B cell (primary cell): ENCODE measurements at regions of chr11 and their contacts with region 1.

Region 1: DNA sequence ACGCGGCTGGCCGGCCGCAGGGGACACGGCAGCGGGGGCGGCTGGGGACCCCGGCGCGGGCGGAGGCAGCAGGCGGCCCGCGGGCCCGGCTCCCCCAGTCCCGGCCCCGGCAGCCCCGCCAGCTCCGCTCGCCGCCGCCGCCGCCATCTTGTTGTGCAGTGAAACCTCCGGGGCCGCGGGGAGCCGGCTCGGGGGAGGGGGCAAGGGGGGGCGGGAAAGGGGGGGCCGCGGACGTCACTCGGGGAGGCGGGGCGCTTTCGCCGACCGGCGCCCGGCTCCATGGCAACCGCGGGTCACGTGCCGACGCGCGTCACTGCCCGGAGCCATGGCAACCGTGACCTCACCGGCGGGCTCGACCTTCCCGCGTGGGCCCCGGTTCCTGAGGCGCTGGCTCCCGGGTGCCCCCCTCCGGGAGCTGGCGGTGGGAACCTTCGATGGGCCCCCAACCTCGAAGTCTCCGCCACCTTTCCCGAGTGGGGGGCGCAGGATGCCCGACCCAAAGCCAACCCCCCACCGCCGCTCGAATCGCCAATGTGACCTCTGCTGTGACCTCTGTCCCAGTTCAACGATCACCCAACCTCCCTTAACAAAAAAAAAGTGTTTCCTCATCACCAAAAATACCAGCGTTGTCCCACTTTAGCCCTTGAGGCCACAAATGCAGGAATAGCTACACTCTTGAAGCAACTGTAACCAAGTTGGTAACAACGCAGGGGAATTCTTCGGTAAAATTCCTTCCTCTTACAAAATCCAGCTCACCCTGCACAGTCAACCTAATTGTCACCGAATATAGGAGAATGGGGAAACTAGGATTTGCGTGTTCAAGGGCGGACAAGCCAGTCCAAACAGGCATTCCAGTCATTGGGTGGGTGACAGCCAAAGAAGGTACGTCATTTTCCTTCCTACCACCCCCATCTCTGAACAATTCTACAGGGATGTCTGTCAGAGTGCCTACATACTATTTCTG is at the start of gene SIK3:
- DNase-seq: peak; percentile 97
- ATAC-seq: peak; percentile 80
- H3K4me3 ChIP-seq: peak within 1 kb of the TSS; percentile 67 to 93 (median 78)
- H3K4me3 Mint-ChIP-seq: peak within 1 kb of the TSS; percentile 99
- H3K27ac ChIP-seq: peak within 1 kb of the TSS; percentile 92 to 100
- H3K27ac Mint-ChIP-seq: peak within 1 kb of the TSS; percentile 95
- H3K4me1 ChIP-seq: peaks cover 44 to 51% of the 10 kb centered on the region in 2 donors
- H3K4me1 Mint-ChIP-seq: peaks cover 56% of the 10 kb centered on the region
- H3K27me3 ChIP-seq: no peaks in the 10 kb centered on the region
- H3K27me3 Mint-ChIP-seq: no peaks in the 10 kb centered on the region
- CTCF ChIP-seq: peak; percentile 47
- total RNA-seq, gene SIK3: 180 and 196 TPM in 2 replicates

Region 2: DNA sequence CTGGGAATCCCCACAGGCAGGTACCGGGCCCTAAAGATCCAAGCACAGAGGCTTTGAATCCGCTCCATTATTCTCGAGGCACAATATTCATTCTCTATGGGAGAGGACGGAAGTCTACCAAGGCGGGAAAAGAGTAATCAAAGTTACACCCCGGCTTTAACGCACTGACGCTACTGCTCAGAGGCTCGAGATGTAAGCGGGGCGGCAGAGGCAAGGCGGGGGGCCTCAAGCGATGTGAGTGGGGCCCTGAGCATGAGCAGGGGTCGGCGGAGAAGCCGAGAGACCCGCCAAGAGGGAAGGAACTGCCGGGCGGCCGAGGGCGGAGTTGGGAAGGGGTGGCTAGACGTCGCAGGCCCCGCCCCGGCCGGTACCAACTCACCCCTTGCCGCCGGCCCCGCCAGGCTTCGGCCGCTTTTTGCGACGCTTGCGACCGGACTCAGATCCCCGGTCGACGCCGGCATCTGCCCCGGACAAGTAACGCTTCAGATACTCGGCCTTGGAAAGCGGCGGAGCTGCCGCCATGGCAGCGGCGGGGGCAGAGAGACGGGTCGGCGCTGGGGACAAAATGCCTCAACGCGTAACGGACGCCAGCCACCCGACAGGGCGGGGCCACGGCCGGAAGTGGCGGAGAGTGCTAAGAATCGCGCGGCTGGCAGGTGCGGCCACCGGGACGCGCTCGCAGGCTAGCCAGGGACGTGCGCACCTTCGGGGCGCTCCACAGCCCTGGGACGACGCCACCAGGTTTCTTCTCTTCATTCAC is 325.9 kb before region 1 on chr11 and contains the start of gene BUD13:
- CTCF ChIA-PET with region 1: no interaction called
- POLR2A ChIA-PET with region 1: no interaction called
- intact Hi-C with region 1: loop called (anchors 5 kb)
- DNase-seq: peak; percentile 96
- ATAC-seq: peak; percentile 89
- H3K4me3 ChIP-seq: peak within 1 kb of the TSS; percentile 71 to 99 (median 95)
- H3K4me3 Mint-ChIP-seq: peak within 1 kb of the TSS; percentile 93
- H3K27ac ChIP-seq: peak within 1 kb of the TSS; percentile 85 to 96
- H3K27ac Mint-ChIP-seq: peak within 1 kb of the TSS; percentile 93
- H3K4me1 ChIP-seq: peaks cover 23 to 28% of the 10 kb centered on the region in 2 donors
- H3K4me1 Mint-ChIP-seq: peaks cover 34% of the 10 kb centered on the region
- H3K27me3 ChIP-seq: no peaks in the 10 kb centered on the region
- H3K27me3 Mint-ChIP-seq: no peaks in the 10 kb centered on the region
- CTCF ChIP-seq: no peak
- total RNA-seq, gene BUD13: 24.2 and 24.8 TPM in 2 replicates

Region 3: GRCh38 chr11:116890193-116890592 is 208.4 kb before region 1 on chr11:
- CTCF ChIA-PET with region 1: interaction called, 39 read pairs
- POLR2A ChIA-PET with region 1: no interaction called
- intact Hi-C with region 1: loop called (anchors 1 kb)
- DNase-seq: no peak
- ATAC-seq: no peak
- H3K4me3 ChIP-seq: no peak overlapping the region
- H3K4me3 Mint-ChIP-seq: no peak overlapping the region
- H3K27ac ChIP-seq: peak overlapping the region in 1 of 2 donors; percentile 50
- H3K27ac Mint-ChIP-seq: peak overlapping the region; percentile 16
- H3K4me1 ChIP-seq: peaks cover 3 to 6% of the 10 kb centered on the region in 2 donors
- H3K4me1 Mint-ChIP-seq: peaks cover 11% of the 10 kb centered on the region
- H3K27me3 ChIP-seq: no peaks in the 10 kb centered on the region
- H3K27me3 Mint-ChIP-seq: no peaks in the 10 kb centered on the region
- CTCF ChIP-seq: no peak

Region 4: DNA sequence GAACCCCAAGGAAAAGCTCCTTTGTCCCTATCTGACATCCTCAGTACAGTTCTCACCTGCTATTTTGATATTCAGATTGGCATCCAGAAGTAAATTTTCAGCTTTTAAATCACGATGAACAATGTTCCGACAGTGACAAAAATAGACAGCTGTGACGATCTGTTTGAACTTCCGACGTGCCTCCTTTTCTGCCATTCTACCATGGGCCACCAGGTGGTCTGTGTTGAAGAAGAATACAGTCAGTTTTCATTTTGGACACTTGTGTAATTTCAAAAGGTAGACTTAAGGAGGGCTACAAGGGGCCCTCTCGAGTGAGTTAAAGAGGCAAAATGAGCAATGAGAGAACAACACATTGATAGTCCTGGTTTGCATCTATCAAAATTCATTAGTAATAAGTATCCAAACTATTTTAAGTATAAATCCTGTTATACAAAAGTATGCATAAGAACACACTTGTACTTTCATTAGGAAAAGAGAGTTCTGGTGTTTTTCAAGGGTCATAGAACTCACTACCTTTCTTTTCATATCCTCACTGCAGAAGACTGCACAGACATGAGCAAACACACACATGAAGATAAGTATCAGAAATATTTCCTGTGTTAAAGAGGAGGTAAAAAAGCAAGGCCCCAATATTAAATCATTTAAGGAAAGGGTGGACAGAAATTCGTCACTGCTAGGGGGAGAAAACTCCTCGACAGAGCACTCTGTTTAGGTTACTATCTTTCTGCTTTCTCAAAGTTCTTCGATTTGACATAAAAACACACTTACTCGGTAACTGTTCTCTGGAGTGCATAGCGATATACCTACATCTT is 171.2 kb before region 1 on chr11:
- CTCF ChIA-PET with region 1: interaction called, 57 read pairs
- POLR2A ChIA-PET with region 1: interaction called, 19 read pairs
- intact Hi-C with region 1: loop called (anchors 1 kb)
- DNase-seq: peak; percentile 81
- ATAC-seq: peak; percentile 44
- H3K4me3 ChIP-seq: peak overlapping the region in 3 of 5 experiments; percentile 24 to 54 (median 32)
- H3K4me3 Mint-ChIP-seq: peak overlapping the region; percentile 79
- H3K27ac ChIP-seq: peak overlapping the region; percentile 95 to 96
- H3K27ac Mint-ChIP-seq: peak overlapping the region; percentile 95
- H3K4me1 ChIP-seq: peaks cover 86 to 91% of the 10 kb centered on the region in 2 donors
- H3K4me1 Mint-ChIP-seq: peaks cover 79% of the 10 kb centered on the region
- H3K27me3 ChIP-seq: no peaks in the 10 kb centered on the region
- H3K27me3 Mint-ChIP-seq: no peaks in the 10 kb centered on the region
- CTCF ChIP-seq: peak; percentile 79

Region 5: DNA sequence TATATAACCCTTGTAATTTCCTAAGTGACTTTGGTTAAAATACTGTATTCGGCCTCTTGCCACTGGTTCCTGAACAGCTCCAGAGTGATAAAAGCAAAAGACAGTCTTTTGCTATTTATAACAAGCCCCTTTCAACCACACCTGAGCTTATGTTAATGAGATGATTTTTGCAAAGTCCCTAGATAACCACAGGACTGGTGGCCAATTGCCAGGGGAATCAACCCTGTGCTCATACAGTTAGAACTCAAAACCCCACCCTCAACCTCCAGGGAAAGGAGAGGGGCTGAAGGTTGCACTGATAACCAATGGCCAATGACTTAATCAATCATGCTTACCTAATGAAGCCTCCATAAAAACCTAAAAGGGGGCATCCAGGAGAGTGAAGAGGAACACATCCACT is 78.3 kb before region 1 on chr11:
- CTCF ChIA-PET with region 1: no interaction called
- POLR2A ChIA-PET with region 1: interaction called, 3 read pairs
- intact Hi-C with region 1: loop called (anchors 2 kb)
- DNase-seq: peak; percentile 70
- ATAC-seq: peak; percentile 81
- H3K4me3 ChIP-seq: peak overlapping the region in 3 of 5 experiments; percentile 3 to 21 (median 13)
- H3K4me3 Mint-ChIP-seq: peak overlapping the region; percentile 65
- H3K27ac ChIP-seq: peak overlapping the region; percentile 77 to 80
- H3K27ac Mint-ChIP-seq: peak overlapping the region; percentile 71
- H3K4me1 ChIP-seq: peaks cover 58 to 66% of the 10 kb centered on the region in 2 donors
- H3K4me1 Mint-ChIP-seq: peaks cover 63% of the 10 kb centered on the region
- H3K27me3 ChIP-seq: no peaks in the 10 kb centered on the region
- H3K27me3 Mint-ChIP-seq: no peaks in the 10 kb centered on the region
- CTCF ChIP-seq: no peak

Region 6: DNA sequence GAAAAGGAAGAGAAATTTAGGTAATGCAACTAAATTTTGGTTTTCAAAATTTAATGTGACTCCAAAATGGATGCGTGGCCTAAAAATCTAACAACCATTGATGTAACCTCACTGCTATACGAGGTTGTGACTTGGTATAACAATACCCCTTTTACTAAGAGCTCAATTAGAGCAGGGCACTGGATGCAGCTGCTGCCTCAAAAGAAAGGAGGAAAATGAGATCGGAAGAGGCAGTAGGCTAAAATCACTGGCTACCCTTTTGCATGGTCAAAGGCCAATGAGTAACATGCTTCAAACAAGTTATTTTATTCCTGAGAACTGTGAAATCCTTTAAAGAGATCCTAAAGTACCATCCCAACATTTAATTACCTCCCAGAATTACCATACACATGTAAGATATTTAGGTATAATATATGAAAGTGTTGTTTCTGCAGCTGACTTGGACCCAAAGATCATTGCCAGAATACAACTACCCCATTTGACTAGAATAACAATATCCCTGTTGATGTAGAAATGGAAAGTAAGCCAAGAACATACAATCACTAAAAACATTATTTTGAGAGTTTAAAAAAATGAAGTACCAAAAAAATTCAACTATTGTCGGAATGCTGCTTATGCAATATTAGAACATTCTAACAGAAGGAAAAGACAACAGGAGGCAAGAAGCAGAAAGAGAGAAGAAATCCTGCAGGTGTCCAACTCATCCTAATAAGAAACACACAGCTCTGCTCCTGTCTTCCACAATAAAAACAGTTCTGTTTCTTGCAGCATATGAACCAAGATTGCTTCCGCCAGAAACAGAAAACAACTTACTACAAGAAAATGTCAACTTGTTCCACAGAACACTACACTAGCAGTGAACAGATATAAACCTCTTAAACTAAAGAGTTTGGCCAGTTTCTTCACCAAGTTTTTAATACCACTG is 15.3 kb before region 1 on chr11:
- CTCF ChIA-PET with region 1: interaction called, 3 read pairs
- POLR2A ChIA-PET with region 1: no interaction called
- intact Hi-C with region 1: loop called (anchors 1 kb)
- DNase-seq: no peak
- ATAC-seq: no peak
- H3K4me3 ChIP-seq: no peak overlapping the region
- H3K4me3 Mint-ChIP-seq: no peak overlapping the region
- H3K27ac ChIP-seq: no peak overlapping the region
- H3K27ac Mint-ChIP-seq: no peak overlapping the region
- H3K4me1 ChIP-seq: peaks cover 13 to 15% of the 10 kb centered on the region in 2 donors
- H3K4me1 Mint-ChIP-seq: peaks cover 63% of the 10 kb centered on the region
- H3K27me3 ChIP-seq: no peaks in the 10 kb centered on the region
- H3K27me3 Mint-ChIP-seq: no peaks in the 10 kb centered on the region
- CTCF ChIP-seq: no peak

Region 7: DNA sequence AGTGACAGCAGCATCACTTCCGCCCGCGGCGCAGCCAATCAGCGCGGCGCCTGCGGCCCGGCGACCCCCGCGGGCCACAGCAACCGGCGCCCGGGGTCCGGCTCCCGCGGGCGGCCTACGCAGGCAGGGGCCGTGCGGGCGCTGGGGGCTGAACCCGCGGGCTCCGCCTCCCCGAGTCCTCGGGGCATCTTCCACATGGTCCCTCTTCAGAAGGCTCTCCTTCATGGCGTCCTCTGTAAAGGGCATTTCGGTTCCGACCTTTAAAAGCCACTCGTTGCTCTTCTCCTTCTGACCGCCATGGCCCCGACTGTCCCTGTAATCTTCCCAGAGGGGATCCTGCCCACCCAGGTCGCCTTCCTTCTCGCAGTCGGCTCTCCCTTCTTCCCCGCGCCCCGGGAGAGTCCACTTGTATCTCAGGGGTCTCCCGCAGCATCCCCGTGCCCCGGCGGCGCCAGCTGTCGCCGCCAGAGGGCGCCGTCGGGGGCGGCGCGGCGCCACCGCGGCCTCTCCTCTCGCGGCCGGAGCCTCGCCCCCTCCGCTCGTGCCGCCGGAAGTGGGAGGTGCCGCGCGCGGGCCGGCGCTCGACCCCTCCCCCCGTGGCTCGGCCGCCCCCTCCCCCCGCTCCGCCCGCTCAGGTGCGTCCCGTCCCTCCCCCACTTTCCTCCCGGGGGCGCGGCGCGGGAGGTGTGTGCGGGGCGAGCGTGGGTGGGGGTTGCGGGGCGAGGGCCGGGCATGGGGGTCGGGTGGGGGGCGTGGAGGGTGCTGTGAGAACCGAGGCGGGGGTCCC is 133.7 kb after region 1 on chr11 and contains the start of gene RNF214:
- CTCF ChIA-PET with region 1: interaction called, 11 read pairs
- POLR2A ChIA-PET with region 1: interaction called, 13 read pairs
- intact Hi-C with region 1: loop called (anchors 5 kb)
- DNase-seq: peak; percentile 89
- ATAC-seq: peak; percentile 78
- H3K4me3 ChIP-seq: peak within 1 kb of the TSS; percentile 64 to 99 (median 91)
- H3K4me3 Mint-ChIP-seq: peak within 1 kb of the TSS; percentile 95
- H3K27ac ChIP-seq: peak within 1 kb of the TSS; percentile 82 to 84
- H3K27ac Mint-ChIP-seq: peak within 1 kb of the TSS; percentile 99
- H3K4me1 ChIP-seq: peaks cover 34 to 38% of the 10 kb centered on the region in 2 donors
- H3K4me1 Mint-ChIP-seq: peaks cover 48% of the 10 kb centered on the region
- H3K27me3 ChIP-seq: no peaks in the 10 kb centered on the region
- H3K27me3 Mint-ChIP-seq: no peaks in the 10 kb centered on the region
- CTCF ChIP-seq: peak; percentile 83
- total RNA-seq, gene RNF214: 33.6 and 36.1 TPM in 2 replicates